ENCODE measurements at regions of chr19 and their contacts with region 1.

Region 1: GRCh38 chr19:40139533-40140287 is 49.0 kb upstream of the ZNF780A start:
- DNase-seq: no peak
- ATAC-seq: peak in 1 of 4 donors; percentile 41
- H3K4me3 ChIP-seq: no peak overlapping the region
- H3K27ac ChIP-seq: no peak overlapping the region
- H3K4me1 ChIP-seq: peaks cover 0 to 30% (median 10%) of the 10 kb centered on the region in 12 donors
- H3K27me3 ChIP-seq: peaks cover 0 to 14% (median 4%) of the 10 kb centered on the region in 9 donors
- CTCF ChIP-seq: peak; percentile 49 to 81 (median 67)
- POLR2A ChIP-seq: no peak

Region 2: DNA sequence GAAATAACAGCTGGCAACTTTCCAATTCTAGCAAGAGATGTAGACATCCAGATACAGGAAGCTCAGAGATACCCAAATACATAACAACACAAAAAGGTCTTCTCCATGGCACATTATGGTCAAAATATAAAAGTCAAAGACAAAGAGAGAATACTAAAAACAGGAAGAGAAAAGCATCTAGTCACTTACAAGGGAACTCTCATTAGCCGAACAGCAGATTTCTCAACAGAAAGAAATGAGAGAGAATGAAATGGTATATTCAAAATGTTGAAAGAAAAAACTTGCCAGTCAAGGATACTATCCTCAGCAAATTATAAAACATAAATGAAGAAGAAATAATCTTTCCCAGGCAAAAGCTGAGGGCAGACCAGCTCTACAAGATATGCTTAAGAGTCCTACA is 61.3 kb before region 1 on chr19:
- intact Hi-C with region 1: no loop called
- DNase-seq: no peak
- ATAC-seq: no peak
- H3K4me3 ChIP-seq: no peak overlapping the region
- H3K27ac ChIP-seq: no peak overlapping the region
- H3K4me1 ChIP-seq: peaks cover 0 to 11% (median 0%) of the 10 kb centered on the region in 12 donors
- H3K27me3 ChIP-seq: no peaks in the 10 kb centered on the region
- CTCF ChIP-seq: no peak
- POLR2A ChIP-seq: no peak

Region 3: GRCh38 chr19:40221858-40222837 is 82.4 kb after region 1 on chr19:
- intact Hi-C with region 1: loop called (anchors 1 to 5 kb)
- DNase-seq: peak; percentile 74 to 88 (median 82)
- ATAC-seq: peak; percentile 70 to 90 (median 86)
- H3K4me3 ChIP-seq: no peak overlapping the region
- H3K27ac ChIP-seq: no peak overlapping the region
- H3K4me1 ChIP-seq: peaks cover 2 to 35% (median 11%) of the 10 kb centered on the region in 12 donors
- H3K27me3 ChIP-seq: peaks cover 23 to 72% (median 50%) of the 10 kb centered on the region in 9 donors
- CTCF ChIP-seq: peak; percentile 85 to 94 (median 90)
- POLR2A ChIP-seq: no peak